ENCODE measurements at regions of chr9 and their contacts with region 1.

Region 1: DNA sequence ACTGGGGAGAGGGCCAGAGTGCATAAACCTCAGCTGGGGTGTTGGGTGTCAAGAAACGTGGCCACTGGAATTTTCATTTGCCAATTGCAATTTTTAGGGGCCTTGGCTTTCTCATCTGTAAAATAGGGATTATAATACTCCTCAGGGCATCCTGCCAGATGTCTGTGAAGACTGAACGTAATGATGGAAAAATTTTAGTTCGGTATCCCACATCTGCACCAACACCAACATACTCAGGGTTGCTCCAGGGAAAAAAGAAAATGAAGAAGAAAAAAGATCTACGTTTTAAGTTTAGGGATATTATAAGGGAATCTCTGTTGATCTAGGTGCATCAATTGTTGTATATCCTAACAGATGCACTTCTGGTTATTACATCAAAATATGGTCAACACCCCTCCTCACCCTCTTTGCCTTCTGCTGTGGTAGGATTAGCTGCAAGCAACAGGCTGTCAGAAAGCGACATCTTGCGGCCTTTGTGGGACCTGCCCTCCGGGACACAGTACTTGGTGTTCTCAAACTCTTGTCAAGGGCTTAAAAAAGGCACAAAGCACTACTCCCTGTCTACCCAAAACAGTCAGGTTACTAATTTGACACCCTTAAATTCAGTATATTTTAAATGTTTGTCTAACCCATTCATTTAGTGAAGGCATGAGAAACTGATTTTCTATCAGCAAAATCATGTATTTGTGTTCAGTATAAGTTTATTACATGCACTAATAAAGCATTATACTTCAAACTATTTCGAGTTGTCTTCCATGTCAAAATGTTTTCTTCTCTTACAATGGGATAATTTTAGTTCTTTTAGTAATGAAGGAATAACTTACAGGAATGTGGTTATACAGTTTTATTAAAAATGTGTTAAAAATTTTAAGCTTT is 8.3 kb upstream of the TBC1D2 start:
- DNase-seq: peak in 1 of 2 experiments; percentile 75
- H3K4me3 ChIP-seq: no peak overlapping the region
- H3K27ac ChIP-seq: no peak overlapping the region
- H3K4me1 ChIP-seq: peaks cover 0 to 3% (median 0%) of the 10 kb centered on the region in 4 experiments; a peak in 1 of 7 replicates
- H3K27me3 ChIP-seq: no peaks in the 10 kb centered on the region
- CTCF ChIP-seq: peak; percentile 88 to 98 (median 93)
- EP300 ChIP-seq: no peak
- POLR2A ChIP-seq: no peak
- RAD21 ChIP-seq: peak; percentile 98 to 99

Region 2: GRCh38 chr9:98202252-98202651 is 61.5 kb before region 1 on chr9:
- CTCF ChIA-PET with region 1: interaction called, 18 read pairs
- POLR2A ChIA-PET with region 1: interaction called, 3 read pairs
- DNase-seq: no peak
- H3K4me3 ChIP-seq: no peak overlapping the region
- H3K27ac ChIP-seq: no peak overlapping the region
- H3K4me1 ChIP-seq: peaks cover 0 to 10% (median 6%) of the 10 kb centered on the region in 4 experiments; a peak in 6 of 7 replicates
- H3K27me3 ChIP-seq: no peaks in the 10 kb centered on the region
- CTCF ChIP-seq: no peak
- EP300 ChIP-seq: no peak
- POLR2A ChIP-seq: no peak
- RAD21 ChIP-seq: no peak

Region 3: GRCh38 chr9:98241357-98242300 is 22.1 kb before region 1 on chr9:
- CTCF ChIA-PET with region 1: interaction called, 16 read pairs
- POLR2A ChIA-PET with region 1: no interaction called
- DNase-seq: no peak
- H3K4me3 ChIP-seq: no peak overlapping the region
- H3K27ac ChIP-seq: no peak overlapping the region
- H3K4me1 ChIP-seq: peaks cover 0 to 3% (median 2%) of the 10 kb centered on the region in 4 experiments; a peak in 3 of 7 replicates
- H3K27me3 ChIP-seq: no peaks in the 10 kb centered on the region
- CTCF ChIP-seq: peak in 2 of 3 experiments; percentile 33 to 59; a peak in 2 of 4 replicates
- EP300 ChIP-seq: no peak
- POLR2A ChIP-seq: no peak
- RAD21 ChIP-seq: peak; percentile 49 to 58